ENCODE measurements at regions of chr19 and their contacts with region 1.

Region 1: DNA sequence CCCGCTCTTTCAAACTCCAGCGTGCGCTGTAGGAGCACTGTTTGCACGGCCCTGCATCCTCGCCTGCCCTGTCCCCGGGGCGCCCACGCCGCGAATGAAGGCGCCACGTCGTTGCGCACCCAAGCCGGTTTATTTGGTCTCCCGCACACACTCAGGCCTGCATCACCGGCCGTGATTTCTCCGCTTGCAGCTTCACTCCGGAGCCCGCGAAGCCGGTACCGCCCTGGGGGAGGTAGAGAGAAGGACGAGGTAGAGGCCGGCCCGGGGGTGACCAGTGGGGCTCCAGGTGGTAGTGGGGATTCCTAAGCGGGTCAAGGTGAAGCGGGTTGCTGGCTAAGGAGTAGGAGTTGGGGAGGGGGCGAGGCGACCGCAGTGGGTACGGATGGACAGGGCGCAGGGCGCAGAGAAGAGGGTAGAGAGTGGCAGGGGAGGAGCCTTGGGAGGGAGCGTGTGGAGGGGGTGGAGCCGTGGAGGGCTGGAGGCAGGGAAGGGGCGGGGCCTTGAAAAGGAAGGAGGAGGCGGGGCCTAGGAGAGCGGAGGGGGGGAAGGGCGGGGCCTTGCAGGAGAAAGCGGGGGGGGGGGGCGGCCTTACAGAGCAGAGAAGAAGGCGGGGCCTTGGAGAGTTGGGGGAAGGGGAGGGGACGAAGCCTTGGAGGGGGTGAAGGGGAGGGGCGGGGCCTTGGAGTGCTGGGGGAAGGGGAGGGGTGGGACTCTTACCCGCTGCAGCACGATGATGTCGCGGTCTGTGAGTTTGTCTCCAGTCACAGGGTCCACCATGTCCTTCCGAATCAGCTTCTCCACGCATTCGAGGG is 24.6 kb downstream of the NOSIP start:
- DNase-seq: peak; percentile 91
- H3K4me3 Mint-ChIP-seq: peak overlapping the region; percentile 43
- H3K27ac Mint-ChIP-seq: peak overlapping the region; percentile 95
- H3K4me1 Mint-ChIP-seq: peaks cover 73% of the 10 kb centered on the region
- H3K27me3 Mint-ChIP-seq: no peaks in the 10 kb centered on the region

Region 2: GRCh38 chr19:49533551-49534488 is 22.0 kb before region 1 on chr19:
- CTCF ChIA-PET with region 1: interaction called, 6 read pairs
- POLR2A ChIA-PET with region 1: interaction called, 3 read pairs
- intact Hi-C with region 1: loop called (anchors 2 kb)
- DNase-seq: peak; percentile 83
- H3K4me3 Mint-ChIP-seq: peak overlapping the region; percentile 75
- H3K27ac Mint-ChIP-seq: no peak overlapping the region
- H3K4me1 Mint-ChIP-seq: peaks cover 20% of the 10 kb centered on the region
- H3K27me3 Mint-ChIP-seq: no peaks in the 10 kb centered on the region

Region 3: GRCh38 chr19:49817964-49818648 is 262.3 kb after region 1 on chr19 and contains the start of gene MED25:
- CTCF ChIA-PET with region 1: no interaction called
- POLR2A ChIA-PET with region 1: no interaction called
- intact Hi-C with region 1: no loop called
- DNase-seq: peak; percentile 91
- H3K4me3 Mint-ChIP-seq: peak within 1 kb of the TSS; percentile 93
- H3K27ac Mint-ChIP-seq: peak within 1 kb of the TSS; percentile 98
- H3K4me1 Mint-ChIP-seq: peaks cover 19% of the 10 kb centered on the region
- H3K27me3 Mint-ChIP-seq: no peaks in the 10 kb centered on the region
- total RNA-seq, gene MED25: 45.6 to 50.2 TPM

Measured in activated CD4-positive, alpha-beta memory T cell treated with anti-CD3 and anti-CD28 coated beads for 36 hours (primary cell).